Heart right ventricle (tissue), 16 donors: ENCODE measurements at regions of chr6 and their contacts with region 1.

Region 1: DNA sequence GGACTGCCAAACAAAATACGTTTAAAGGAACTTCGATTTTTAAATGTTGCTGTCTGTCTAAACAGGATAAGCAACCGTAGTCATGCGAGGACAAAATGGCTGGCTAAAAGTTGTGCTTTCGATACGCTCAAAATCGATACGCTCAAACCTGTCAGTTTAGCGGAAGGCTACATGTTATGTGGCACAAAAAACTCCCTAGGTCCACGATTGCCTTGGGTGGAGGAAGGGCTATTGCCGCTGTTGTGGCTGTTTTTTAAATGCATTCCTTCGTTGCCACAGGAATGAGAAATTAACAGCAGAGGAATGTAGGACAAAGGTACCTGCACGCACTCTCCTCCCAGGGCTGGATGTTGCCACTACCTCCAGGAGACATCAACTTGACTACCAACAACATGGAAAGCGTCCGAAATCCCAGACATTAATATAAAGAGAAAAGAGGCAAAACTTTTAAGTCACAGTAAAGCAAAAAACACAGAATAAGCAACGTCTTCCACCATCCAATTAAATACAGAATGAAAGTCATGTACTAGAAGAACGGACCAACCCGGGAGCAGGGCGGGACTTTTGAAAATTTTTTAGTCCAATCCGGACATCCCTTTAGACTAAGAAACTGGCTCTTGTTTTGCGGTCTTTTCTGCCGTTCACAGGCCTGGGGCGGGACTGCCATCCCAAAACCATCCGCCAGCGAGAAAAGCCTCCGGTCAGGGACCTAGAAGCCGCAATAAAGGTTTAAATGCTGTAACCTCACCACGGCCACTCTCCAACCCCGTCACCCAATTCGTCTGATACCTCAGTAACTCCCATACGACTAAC is 32.2 kb upstream of the HFE start:
- DNase-seq: peak; percentile 66 to 95
- ATAC-seq: peak; percentile 83 to 91 (median 90)
- H3K4me3 ChIP-seq: peak overlapping the region; percentile 53 to 93 (median 76)
- H3K27ac ChIP-seq: peak overlapping the region; percentile 85 to 97 (median 94)
- H3K4me1 ChIP-seq: peaks cover 0 to 32% (median 16%) of the 10 kb centered on the region in 9 donors
- H3K27me3 ChIP-seq: no peaks in the 10 kb centered on the region
- CTCF ChIP-seq: peak in 3 of 9 donors; percentile 21 to 40 (median 23)

Region 2: DNA sequence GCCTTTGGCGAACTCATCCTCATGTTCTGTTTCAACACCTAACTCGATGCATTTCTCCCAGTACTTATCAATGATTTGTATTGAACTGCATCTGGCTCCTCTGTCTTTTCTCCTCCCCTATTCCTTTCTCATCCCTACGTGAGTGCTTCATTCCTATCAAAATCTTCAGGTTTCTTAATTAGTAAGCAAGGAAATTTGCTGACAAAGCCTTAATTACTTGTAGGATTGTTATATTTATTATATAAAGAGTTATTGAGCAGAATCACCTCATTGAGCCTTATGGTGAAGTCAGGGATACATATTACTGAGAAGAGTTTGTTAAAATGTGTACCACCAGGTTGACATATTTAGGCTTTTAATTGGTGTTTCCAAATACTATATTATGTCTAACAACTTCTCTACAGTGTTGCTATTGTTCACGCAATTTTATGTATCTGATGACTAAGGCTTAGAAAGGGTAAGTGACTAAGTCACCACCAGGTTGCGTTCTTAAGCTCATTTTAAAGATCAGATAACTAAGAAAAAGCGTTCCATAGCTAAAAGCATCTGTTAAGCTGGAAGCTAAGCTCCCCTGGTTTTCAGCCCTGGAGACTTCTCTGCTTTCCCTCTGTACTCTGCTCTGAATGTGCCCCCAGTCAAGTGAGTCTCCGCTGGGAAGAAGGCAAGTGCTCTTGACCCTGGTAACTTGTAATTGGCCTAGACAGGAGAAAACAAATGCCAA is 384.1 kb before region 1 on chr6:
- intact Hi-C with region 1: no loop called
- DNase-seq: no peak
- ATAC-seq: no peak
- H3K4me3 ChIP-seq: no peak overlapping the region
- H3K27ac ChIP-seq: no peak overlapping the region
- H3K4me1 ChIP-seq: no peaks in the 10 kb centered on the region
- H3K27me3 ChIP-seq: peaks cover 0 to 4% (median 0%) of the 10 kb centered on the region in 7 donors
- CTCF ChIP-seq: no peak

Region 3: GRCh38 chr6:25732468-25733198 is 322.4 kb before region 1 on chr6:
- intact Hi-C with region 1: no loop called
- DNase-seq: no peak
- ATAC-seq: no peak
- H3K4me3 ChIP-seq: no peak overlapping the region
- H3K27ac ChIP-seq: no peak overlapping the region
- H3K4me1 ChIP-seq: no peaks in the 10 kb centered on the region
- H3K27me3 ChIP-seq: peaks cover 0 to 68% (median 24%) of the 10 kb centered on the region in 7 donors
- CTCF ChIP-seq: no peak

Region 4: GRCh38 chr6:26103770-26104456 is 48.9 kb after region 1 on chr6:
- intact Hi-C with region 1: loop called in 2 of 10 experiments (anchors 2 kb)
- DNase-seq: peak; percentile 83 to 90
- ATAC-seq: peak; percentile 89 to 96 (median 95)
- H3K4me3 ChIP-seq: peak overlapping the region; percentile 22 to 75 (median 60)
- H3K27ac ChIP-seq: peak overlapping the region; percentile 37 to 91 (median 80)
- H3K4me1 ChIP-seq: peaks cover 0 to 20% (median 10%) of the 10 kb centered on the region in 9 donors
- H3K27me3 ChIP-seq: no peaks in the 10 kb centered on the region
- CTCF ChIP-seq: peak in 8 of 9 donors; percentile 13 to 57 (median 40)

Region 5: DNA sequence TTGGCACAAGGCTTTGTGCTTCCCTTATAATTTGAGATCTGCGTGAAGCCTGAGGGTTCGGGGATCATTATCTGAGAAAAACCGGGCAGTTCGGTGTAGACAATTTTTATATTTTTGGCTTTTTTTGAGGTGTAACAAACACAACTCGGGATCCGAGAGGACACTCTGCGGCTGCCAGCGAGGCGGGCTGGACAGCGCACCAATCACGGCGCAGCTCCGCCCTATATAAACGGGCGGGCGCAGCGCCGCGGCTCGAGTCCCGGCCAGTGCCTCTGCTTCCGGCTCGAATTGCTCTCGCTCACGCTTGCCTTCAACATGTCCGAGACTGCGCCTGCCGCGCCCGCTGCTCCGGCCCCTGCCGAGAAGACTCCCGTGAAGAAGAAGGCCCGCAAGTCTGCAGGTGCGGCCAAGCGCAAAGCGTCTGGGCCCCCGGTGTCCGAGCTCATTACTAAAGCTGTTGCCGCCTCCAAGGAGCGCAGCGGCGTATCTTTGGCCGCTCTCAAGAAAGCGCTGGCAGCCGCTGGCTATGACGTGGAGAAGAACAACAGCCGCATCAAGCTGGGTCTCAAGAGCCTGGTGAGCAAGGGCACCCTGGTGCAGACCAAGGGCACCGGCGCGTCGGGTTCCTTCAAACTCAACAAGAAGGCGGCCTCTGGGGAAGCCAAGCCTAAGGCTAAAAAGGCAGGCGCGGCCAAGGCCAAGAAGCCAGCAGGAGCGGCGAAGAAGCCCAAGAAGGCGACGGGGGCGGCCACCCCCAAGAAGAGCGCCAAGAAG is 101.2 kb after region 1 on chr6:
- intact Hi-C with region 1: loop called in 2 of 10 experiments (anchors 2 to 5 kb)
- DNase-seq: peak; percentile 90
- ATAC-seq: peak; percentile 85 to 92 (median 88)
- H3K4me3 ChIP-seq: peak overlapping the region; percentile 52 to 97 (median 79)
- H3K27ac ChIP-seq: peak overlapping the region; percentile 81 to 98 (median 94)
- H3K4me1 ChIP-seq: peaks cover 4 to 31% (median 21%) of the 10 kb centered on the region in 9 donors
- H3K27me3 ChIP-seq: no peaks in the 10 kb centered on the region
- CTCF ChIP-seq: peak in 2 of 9 donors; percentile 8 to 15

Region 6: DNA sequence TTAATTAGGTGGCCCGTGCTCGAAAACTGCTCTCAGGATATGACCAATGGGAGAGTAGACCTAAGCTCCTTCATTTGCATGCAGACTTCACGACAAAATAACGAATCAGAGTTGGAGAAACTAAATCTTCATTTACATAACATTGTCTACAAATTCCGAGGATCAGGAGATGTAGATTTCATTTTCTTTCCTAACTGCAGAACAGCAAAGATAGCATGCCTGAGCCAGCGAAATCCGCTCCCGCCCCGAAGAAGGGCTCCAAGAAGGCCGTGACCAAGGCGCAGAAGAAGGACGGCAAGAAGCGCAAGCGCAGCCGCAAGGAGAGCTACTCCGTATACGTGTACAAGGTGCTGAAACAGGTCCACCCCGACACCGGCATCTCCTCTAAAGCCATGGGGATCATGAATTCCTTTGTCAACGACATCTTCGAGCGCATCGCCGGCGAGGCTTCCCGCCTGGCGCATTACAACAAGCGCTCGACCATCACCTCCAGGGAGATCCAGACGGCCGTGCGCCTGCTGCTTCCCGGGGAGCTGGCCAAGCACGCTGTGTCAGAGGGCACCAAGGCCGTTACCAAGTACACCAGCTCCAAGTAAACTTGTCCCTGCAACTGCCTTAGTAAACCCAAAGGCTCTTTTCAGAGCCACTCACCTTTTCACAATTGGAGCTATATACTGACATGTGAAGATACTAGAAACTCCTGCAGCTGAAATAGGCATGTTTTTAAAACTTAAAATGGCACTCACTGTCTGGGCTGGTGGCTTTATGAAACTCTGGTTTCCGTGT is 128.7 kb after region 1 on chr6:
- intact Hi-C with region 1: loop called in 1 of 10 experiments (anchors 10 kb)
- DNase-seq: peak; percentile 58 to 63
- ATAC-seq: peak; percentile 88 to 97 (median 94)
- H3K4me3 ChIP-seq: peak overlapping the region in 9 of 10 donors; percentile 42 to 82 (median 59)
- H3K27ac ChIP-seq: peak overlapping the region in 9 of 10 donors; percentile 61 to 90 (median 77)
- H3K4me1 ChIP-seq: peaks cover 0 to 31% (median 16%) of the 10 kb centered on the region in 9 donors
- H3K27me3 ChIP-seq: peaks cover 0 to 14% (median 0%) of the 10 kb centered on the region in 7 donors
- CTCF ChIP-seq: no peak

Region 7: GRCh38 chr6:26196846-26197648 is 142.0 kb after region 1 on chr6:
- intact Hi-C with region 1: loop called in 1 of 10 experiments (anchors 5 kb)
- DNase-seq: peak; percentile 51 to 83
- ATAC-seq: peak; percentile 52 to 68 (median 62)
- H3K4me3 ChIP-seq: peak overlapping the region; percentile 37 to 75 (median 65)
- H3K27ac ChIP-seq: peak overlapping the region in 9 of 10 donors; percentile 57 to 90 (median 81)
- H3K4me1 ChIP-seq: peaks cover 0 to 52% (median 28%) of the 10 kb centered on the region in 9 donors
- H3K27me3 ChIP-seq: peaks cover 0 to 40% (median 0%) of the 10 kb centered on the region in 7 donors
- CTCF ChIP-seq: peak in 1 of 9 donors; percentile 0